Calu3 (cell line): ENCODE measurements at regions of chr5 and their contacts with region 1.

Region 1: GRCh38 chr5:75734913-75735789 is 17.9 kb upstream of the POC5 start:
- DNase-seq: peak; percentile 68
- H3K4me3 Mint-ChIP-seq: no peak overlapping the region
- H3K27ac Mint-ChIP-seq: no peak overlapping the region
- H3K4me1 Mint-ChIP-seq: peaks cover 12% of the 10 kb centered on the region
- H3K27me3 Mint-ChIP-seq: peaks cover 13% of the 10 kb centered on the region
- CTCF ChIP-seq: peak; percentile 64

Region 2: DNA sequence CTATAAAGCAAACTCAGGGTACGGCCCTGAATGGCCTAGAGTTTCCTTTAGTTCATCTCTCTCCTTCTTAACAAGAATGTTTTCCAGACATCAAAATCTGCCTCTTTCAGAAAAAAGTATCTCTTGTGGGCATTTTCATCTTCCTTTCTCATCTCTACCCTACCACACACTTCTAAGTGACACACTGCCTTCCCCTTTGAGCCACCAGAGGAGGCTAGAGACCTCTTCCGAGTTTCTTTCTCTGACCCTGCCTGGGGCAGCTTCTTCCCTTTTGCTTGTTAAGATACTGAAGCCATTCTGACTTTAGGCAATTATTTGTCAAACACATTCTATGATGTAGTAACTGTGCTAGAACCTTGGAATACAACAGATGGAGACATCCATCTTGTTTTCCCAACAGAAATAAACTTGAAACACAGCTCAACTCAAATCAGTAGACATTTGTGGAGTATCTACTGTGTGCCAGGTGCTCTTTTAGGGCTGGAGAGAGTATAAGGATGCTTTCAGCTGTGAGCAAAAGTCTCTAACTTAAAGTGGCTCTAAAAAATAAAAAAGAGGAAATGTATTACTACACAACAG is 339.4 kb after region 1 on chr5:
- CTCF ChIA-PET with region 1: no interaction called
- intact Hi-C with region 1: loop called (anchors 10 kb)
- DNase-seq: peak; percentile 45
- H3K4me3 Mint-ChIP-seq: no peak overlapping the region
- H3K27ac Mint-ChIP-seq: no peak overlapping the region
- H3K4me1 Mint-ChIP-seq: no peaks in the 10 kb centered on the region
- H3K27me3 Mint-ChIP-seq: peaks cover 95% of the 10 kb centered on the region
- CTCF ChIP-seq: peak; percentile 72

Region 3: DNA sequence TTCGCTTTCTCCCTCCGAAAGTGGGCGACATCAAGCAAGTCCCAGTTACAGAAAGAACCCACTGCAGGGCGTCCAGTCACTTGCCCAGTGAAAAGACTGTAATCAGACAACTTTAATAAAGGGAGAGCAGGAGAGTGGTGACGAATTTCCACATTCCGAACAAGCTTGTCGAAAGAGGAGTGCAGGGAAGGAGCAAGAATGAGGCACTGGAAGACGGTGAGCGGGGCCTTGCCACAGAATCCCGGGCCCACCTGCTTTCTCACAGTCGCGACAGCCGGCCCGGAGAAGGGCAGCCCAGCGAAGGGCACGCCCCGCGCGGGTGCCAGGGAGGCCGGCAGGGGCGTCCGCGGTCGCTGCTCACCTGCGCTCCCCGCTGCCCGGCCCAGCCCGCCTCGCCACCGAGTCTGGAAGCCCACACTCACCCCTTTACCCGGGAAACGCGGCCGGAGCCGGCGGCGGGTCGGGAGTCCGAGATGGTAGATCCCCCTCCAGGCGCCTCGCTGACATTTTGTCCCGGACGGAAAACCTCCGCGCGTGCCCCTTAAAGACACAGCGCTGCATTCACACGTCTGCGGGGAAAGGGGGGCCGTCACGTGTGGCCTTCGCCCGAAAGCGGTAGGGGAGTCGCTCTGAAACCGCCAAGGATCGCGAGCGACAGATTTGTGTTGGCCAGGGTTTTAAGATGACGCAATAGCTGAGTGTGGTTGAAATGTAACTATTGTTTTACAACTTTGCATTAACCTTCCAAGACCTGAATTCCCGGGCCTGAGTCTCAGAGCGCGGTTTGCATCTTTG is 1351.7 kb after region 1 on chr5 and contains the start of gene ZBED3:
- CTCF ChIA-PET with region 1: no interaction called
- intact Hi-C with region 1: loop called (anchors 10 kb)
- DNase-seq: peak; percentile 83
- H3K4me3 Mint-ChIP-seq: peak within 1 kb of the TSS; percentile 90
- H3K27ac Mint-ChIP-seq: peak within 1 kb of the TSS; percentile 95
- H3K4me1 Mint-ChIP-seq: peaks cover 17% of the 10 kb centered on the region
- H3K27me3 Mint-ChIP-seq: no peaks in the 10 kb centered on the region
- CTCF ChIP-seq: no peak
- total RNA-seq, gene ZBED3: 11.0 and 12.3 TPM in 2 replicates

Region 4: GRCh38 chr5:77437194-77437593 is 1702.0 kb after region 1 on chr5:
- CTCF ChIA-PET with region 1: no interaction called
- intact Hi-C with region 1: no loop called
- DNase-seq: no peak
- H3K4me3 Mint-ChIP-seq: no peak overlapping the region
- H3K27ac Mint-ChIP-seq: no peak overlapping the region
- H3K4me1 Mint-ChIP-seq: no peaks in the 10 kb centered on the region
- H3K27me3 Mint-ChIP-seq: no peaks in the 10 kb centered on the region
- CTCF ChIP-seq: no peak